ENCODE measurements at regions of chr15 and their contacts with region 1.

Region 1: GRCh38 chr15:29870495-29871151 is 48.4 kb upstream of the TJP1 start:
- DNase-seq: no peak
- H3K4me3 ChIP-seq: no peak overlapping the region
- H3K27ac ChIP-seq: no peak overlapping the region
- H3K4me1 ChIP-seq: 0 out of 7 replicates have a peak, but pooled peaks cover 0 to 6% (median 0%) of the 10 kb centered on the region in 4 experiments
- H3K27me3 ChIP-seq: no peaks in the 10 kb centered on the region
- CTCF ChIP-seq: no peak
- EP300 ChIP-seq: no peak
- POLR2A ChIP-seq: no peak
- RAD21 ChIP-seq: no peak

Region 2: DNA sequence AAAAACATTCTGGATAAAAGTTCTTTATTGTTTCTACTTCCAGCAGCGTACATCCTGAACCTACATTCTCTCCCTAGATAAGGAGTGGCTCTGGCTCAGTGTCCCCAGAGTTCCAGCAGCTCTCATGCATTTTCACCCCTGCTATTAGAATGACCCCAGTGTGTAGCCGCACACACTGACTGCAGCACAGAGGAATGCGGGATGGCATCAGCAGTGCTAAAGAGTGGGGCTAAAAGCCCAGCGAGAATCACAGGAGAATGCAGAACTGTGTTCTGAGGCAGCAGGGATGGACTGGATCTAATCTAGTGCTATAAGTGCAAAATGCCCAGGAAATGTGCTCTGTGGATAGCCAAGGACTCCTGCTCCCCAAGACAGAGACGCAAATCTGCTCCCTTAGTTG is 18.0 kb after region 1 on chr15:
- CTCF ChIA-PET with region 1: interaction called, 10 read pairs
- POLR2A ChIA-PET with region 1: no interaction called
- DNase-seq: no peak
- H3K4me3 ChIP-seq: no peak overlapping the region
- H3K27ac ChIP-seq: no peak overlapping the region
- H3K4me1 ChIP-seq: peaks cover 6 to 16% (median 9%) of the 10 kb centered on the region in 4 experiments; a peak in 6 of 7 replicates
- H3K27me3 ChIP-seq: no peaks in the 10 kb centered on the region
- CTCF ChIP-seq: no peak
- EP300 ChIP-seq: no peak
- POLR2A ChIP-seq: no peak
- RAD21 ChIP-seq: no peak

Measured in H1 (cell line).